ENCODE measurements at regions of chr3 and their contacts with region 1.

Region 1: GRCh38 chr3:115099986-115100571 is 47.0 kb downstream of the ZBTB20 start:
- DNase-seq: peak in 4 of 5 donors; percentile 1 to 65 (median 56)
- H3K4me3 ChIP-seq: peak overlapping the region; percentile 23
- H3K4me3 Mint-ChIP-seq: peak overlapping the region; percentile 74 to 94 (median 84)
- H3K27ac ChIP-seq: no peak overlapping the region
- H3K27ac Mint-ChIP-seq: peak overlapping the region; percentile 70 to 97 (median 90)
- H3K4me1 ChIP-seq: peaks cover 16% of the 10 kb centered on the region
- H3K4me1 Mint-ChIP-seq: peaks cover 28 to 66% (median 57%) of the 10 kb centered on the region in 3 donors
- H3K27me3 ChIP-seq: no peaks in the 10 kb centered on the region
- H3K27me3 Mint-ChIP-seq: no peaks in the 10 kb centered on the region

Region 2: DNA sequence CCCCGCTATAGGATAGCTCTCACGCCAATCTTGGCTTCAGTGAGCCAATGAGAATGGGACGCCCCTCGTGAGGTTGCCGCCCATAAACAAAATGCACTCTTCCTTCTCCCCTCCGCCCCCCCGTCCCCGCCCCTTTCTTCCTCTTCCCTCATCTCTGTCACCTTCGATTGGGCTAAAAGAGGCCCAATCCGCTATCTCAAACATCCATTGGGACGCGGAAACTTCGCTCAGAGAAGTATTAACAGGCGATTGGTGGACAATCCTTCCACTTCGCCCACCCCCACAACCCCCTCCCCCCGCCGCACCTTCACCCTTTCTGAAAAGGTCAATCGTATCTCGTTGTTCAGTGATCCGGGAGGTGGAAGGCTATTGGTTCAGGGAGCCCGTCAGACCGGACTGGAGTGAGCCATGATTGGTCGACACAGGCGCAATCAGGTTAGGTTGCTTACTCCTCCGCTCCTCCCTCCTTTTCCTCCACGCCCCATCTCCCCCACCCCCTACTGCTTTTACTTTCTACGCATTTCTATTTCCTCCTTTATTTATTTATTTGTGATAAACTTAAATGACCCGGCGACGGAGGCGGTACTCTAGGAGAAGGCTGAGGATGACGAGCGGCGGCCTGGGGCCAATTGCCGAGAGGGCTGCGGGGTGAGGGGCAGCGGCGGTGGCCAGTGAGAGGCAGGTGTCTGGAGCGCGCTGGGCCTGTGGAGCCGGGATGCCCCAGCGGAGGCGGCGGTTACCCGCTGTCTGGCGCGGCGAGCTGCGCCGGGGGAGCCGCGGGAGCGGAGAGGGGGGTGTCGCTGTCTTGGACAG is 47.5 kb after region 1 on chr3:
- CTCF ChIA-PET with region 1: interaction called, 12 read pairs
- POLR2A ChIA-PET with region 1: interaction called, 7 read pairs
- DNase-seq: peak; percentile 94 to 98 (median 97)
- H3K4me3 ChIP-seq: peak overlapping the region; percentile 69
- H3K4me3 Mint-ChIP-seq: peak overlapping the region; percentile 91 to 98 (median 96)
- H3K27ac ChIP-seq: peak overlapping the region; percentile 93
- H3K27ac Mint-ChIP-seq: peak overlapping the region; percentile 92 to 100 (median 99)
- H3K4me1 ChIP-seq: peaks cover 22% of the 10 kb centered on the region
- H3K4me1 Mint-ChIP-seq: peaks cover 25 to 47% (median 32%) of the 10 kb centered on the region in 3 donors
- H3K27me3 ChIP-seq: no peaks in the 10 kb centered on the region
- H3K27me3 Mint-ChIP-seq: no peaks in the 10 kb centered on the region

Region 3: DNA sequence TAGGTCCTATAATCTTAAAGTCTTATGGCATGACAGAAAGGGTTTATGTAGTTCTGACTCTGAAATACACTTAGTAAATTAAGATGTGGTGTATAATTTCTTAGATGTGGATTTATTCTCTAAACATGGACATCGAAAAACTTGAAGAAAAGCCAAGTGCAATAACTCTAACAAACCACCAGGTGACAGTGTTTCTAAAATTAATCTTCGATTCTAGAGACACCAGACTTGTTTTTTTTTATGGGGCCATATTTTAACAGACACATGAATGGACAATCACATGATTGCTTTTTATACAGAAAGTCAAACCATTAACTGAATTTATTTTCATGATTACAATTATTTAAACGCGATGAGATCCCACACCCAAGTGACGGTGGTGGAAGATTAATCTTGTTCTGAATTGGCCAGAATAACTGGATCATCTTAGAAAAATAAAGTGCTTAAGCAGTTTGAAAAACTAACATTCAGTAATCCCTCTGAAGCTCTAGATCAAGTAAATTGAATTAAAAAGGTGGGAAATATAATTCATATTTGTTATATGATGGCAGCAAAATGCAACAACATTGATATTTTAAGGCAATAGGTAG is 1040.1 kb after region 1 on chr3:
- CTCF ChIA-PET with region 1: no interaction called
- POLR2A ChIA-PET with region 1: no interaction called
- DNase-seq: no peak
- H3K4me3 ChIP-seq: no peak overlapping the region
- H3K4me3 Mint-ChIP-seq: no peak overlapping the region
- H3K27ac ChIP-seq: no peak overlapping the region
- H3K27ac Mint-ChIP-seq: no peak overlapping the region
- H3K4me1 ChIP-seq: no peaks in the 10 kb centered on the region
- H3K4me1 Mint-ChIP-seq: no peaks in the 10 kb centered on the region
- H3K27me3 ChIP-seq: no peaks in the 10 kb centered on the region
- H3K27me3 Mint-ChIP-seq: no peaks in the 10 kb centered on the region

Measured in CD8-positive, alpha-beta memory T cell (primary cell).